Activated CD4-positive, alpha-beta T cell treated with anti-CD3 and anti-CD28 coated beads for 36 hours (primary cell): ENCODE measurements at regions of chr15 and their contacts with region 1.

Region 1: GRCh38 chr15:44573386-44573785 is 36.4 kb downstream of the EIF3J start:
- DNase-seq: no peak
- ATAC-seq: no peak
- H3K4me3 Mint-ChIP-seq: no peak overlapping the region
- H3K27ac Mint-ChIP-seq: peak overlapping the region; percentile 13
- H3K4me1 Mint-ChIP-seq: peaks cover 2% of the 10 kb centered on the region
- H3K27me3 Mint-ChIP-seq: no peaks in the 10 kb centered on the region

Region 2: GRCh38 chr15:44788748-44789147 is 215.4 kb after region 1 on chr15:
- CTCF ChIA-PET with region 1: interaction called, 11 read pairs
- POLR2A ChIA-PET with region 1: no interaction called
- intact Hi-C with region 1: no loop called
- DNase-seq: peak; percentile 76
- ATAC-seq: peak; percentile 86
- H3K4me3 Mint-ChIP-seq: no peak overlapping the region
- H3K27ac Mint-ChIP-seq: peak overlapping the region; percentile 79
- H3K4me1 Mint-ChIP-seq: peaks cover 29% of the 10 kb centered on the region
- H3K27me3 Mint-ChIP-seq: no peaks in the 10 kb centered on the region

Region 3: DNA sequence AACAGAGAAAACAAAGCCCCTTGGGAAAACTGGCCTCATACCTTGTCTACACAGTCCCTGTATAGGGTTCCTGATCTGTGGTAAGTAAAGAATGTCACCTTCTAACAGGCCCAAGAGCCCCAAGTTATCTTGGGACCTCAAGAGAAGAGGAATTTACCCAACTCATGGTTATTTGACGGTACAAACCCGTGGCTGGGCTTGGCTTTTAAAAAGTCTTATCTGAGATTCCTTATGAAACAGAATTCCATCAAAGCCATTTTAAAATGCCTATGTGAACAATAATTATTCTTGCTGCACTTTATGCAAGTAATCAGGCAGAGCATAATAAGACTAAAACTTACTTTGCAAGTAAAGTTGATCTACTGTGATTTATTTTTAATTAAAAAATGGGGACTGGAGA is 435.7 kb after region 1 on chr15:
- CTCF ChIA-PET with region 1: no interaction called
- POLR2A ChIA-PET with region 1: no interaction called
- intact Hi-C with region 1: no loop called
- DNase-seq: no peak
- ATAC-seq: no peak
- H3K4me3 Mint-ChIP-seq: no peak overlapping the region
- H3K27ac Mint-ChIP-seq: no peak overlapping the region
- H3K4me1 Mint-ChIP-seq: no peaks in the 10 kb centered on the region
- H3K27me3 Mint-ChIP-seq: peaks cover 13% of the 10 kb centered on the region